ENCODE measurements at regions of chr4 and their contacts with region 1.

Region 1: DNA sequence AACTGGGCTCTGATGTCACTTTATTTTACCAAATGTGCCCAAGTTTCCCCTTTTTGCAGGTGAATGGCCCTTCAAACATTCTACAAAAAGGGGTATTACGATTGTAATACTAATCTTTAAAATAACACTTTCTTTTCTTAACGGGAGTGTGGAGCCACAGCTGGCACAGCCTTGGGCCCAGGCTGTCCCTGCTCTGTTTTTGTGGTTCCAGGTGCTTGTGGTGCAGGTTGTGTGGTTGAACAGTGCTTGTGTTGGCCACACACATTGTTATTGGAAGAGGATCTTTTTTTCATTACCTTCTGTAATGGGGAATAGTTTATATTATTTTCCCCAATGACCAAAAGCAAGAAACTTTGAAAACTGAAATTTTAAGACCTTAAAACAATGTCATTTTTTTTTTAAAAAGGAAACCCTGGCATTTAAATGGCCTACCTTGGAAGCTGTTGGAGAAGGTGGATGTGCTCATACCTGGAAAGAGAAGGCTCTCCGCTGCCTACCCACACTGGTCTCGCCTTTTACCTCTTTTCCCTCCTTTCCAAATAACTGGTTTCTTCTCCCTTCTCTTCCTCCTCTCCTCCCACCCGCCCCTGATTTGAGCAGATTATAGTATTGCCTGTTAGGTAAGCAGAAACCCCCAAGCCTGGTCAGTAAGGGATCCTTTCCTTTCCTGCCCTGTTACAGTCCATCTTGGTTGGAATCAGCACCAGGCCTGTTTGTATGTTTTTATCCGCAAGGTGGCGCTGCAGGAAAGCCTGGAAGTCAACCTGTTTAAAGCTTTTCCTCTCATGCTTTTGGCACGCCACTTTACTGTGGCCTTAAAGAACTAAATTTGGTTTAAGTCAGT is 28.6 kb downstream of the HADH start:
- DNase-seq: peak; percentile 77
- ATAC-seq: peak; percentile 93
- H3K4me3 ChIP-seq: no peak overlapping the region
- H3K27ac ChIP-seq: no peak overlapping the region
- H3K4me1 ChIP-seq: no peaks in the 10 kb centered on the region
- H3K27me3 ChIP-seq: no peaks in the 10 kb centered on the region
- CTCF ChIP-seq: peak; percentile 84
- POLR2A ChIP-seq: no peak
- RAD21 ChIP-seq: peak; percentile 87

Region 2: GRCh38 chr4:108030332-108030731 is 12.1 kb after region 1 on chr4:
- CTCF ChIA-PET with region 1: interaction called, 16 read pairs
- POLR2A ChIA-PET with region 1: no interaction called
- dilution Hi-C with region 1: no loop called
- in situ Hi-C with region 1: no loop called
- intact Hi-C with region 1: no loop called
- DNase-seq: peak; percentile 76
- ATAC-seq: peak; percentile 95
- H3K4me3 ChIP-seq: no peak overlapping the region
- H3K27ac ChIP-seq: no peak overlapping the region
- H3K4me1 ChIP-seq: peaks cover 3% of the 10 kb centered on the region; the same call in 1 of the 2 replicates
- H3K27me3 ChIP-seq: no peaks in the 10 kb centered on the region
- CTCF ChIP-seq: peak; percentile 71
- POLR2A ChIP-seq: no peak
- RAD21 ChIP-seq: peak; percentile 76